Ascending aorta (tissue), 2 donors: ENCODE measurements at regions of chr3 and their contacts with region 1.

Region 1: DNA sequence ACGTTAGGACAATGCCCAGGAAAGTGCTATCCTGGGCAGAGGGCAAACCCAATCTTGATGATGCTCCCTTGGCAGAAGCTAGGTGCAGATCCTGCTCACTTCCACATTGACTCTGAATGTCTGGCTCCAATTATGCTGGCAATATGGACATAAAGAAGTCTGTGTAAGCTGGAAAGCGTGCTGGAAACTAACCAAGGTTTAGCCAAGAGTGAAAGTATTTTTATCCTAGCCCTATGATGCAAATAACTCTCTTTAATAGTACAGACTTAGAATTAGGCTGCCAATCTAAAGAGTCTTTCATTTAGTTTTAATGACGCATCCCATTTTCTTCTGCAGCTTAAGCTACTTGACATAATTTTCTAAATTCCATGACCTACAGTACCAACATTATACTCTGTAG is 571.8 kb downstream of the TUSC7 start:
- DNase-seq: no peak
- H3K4me3 ChIP-seq: no peak overlapping the region
- H3K27ac ChIP-seq: no peak overlapping the region
- H3K4me1 ChIP-seq: no peaks in the 10 kb centered on the region
- H3K27me3 ChIP-seq: no peaks in the 10 kb centered on the region
- CTCF ChIP-seq: no peak

Region 2: GRCh38 chr3:117160176-117160575 is 121.2 kb before region 1 on chr3:
- intact Hi-C with region 1: loop called (anchors 5 kb)
- DNase-seq: no peak
- H3K4me3 ChIP-seq: no peak overlapping the region
- H3K27ac ChIP-seq: no peak overlapping the region
- H3K4me1 ChIP-seq: no peaks in the 10 kb centered on the region
- H3K27me3 ChIP-seq: no peaks in the 10 kb centered on the region
- CTCF ChIP-seq: no peak

Region 3: GRCh38 chr3:117486719-117487716 is 205.6 kb after region 1 on chr3:
- intact Hi-C with region 1: no loop called
- DNase-seq: no peak
- H3K4me3 ChIP-seq: no peak overlapping the region
- H3K27ac ChIP-seq: no peak overlapping the region
- H3K4me1 ChIP-seq: no peaks in the 10 kb centered on the region
- H3K27me3 ChIP-seq: no peaks in the 10 kb centered on the region
- CTCF ChIP-seq: no peak